Natural killer cell (primary cell): ENCODE measurements at regions of chr11 and their contacts with region 1.

Region 1: DNA sequence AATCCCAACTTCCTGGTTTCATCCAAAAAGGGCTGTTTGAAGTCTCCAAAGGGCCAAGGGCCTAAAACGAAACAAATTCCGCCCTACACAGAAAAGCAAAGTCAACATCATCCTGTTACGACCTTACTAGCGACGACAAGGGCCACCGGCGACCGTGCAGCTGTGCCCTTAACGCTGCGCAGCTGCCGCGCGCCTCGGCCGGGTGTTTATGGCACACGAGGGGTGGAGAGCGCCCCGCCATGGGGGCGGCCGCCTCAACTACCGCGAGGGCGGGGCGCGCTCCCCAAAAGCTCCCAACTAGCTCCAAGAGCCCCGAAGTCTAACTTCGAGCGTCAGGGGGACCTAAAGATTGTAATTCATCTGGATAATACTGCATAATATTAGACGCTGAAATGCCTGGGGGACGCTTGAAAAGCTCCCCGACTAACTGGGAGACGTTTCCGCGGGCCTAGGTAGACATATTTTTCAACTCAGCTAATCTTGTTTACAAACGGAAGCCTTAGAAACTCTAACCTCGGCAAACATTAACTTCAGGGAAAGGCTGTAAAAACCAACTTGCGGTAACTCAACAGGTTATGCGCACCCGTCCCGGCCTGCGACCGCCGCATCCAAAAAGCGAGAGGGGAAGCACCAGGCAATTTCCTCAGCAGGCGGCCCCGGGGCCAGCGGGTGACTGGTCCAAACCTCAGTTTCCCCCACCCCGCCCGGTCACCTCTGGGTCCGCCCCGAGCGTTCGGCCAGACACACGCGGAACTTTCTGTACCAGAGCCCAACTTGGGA is 694 bp downstream of the TMEM123 start:
- DNase-seq: peak; percentile 54 to 88
- ATAC-seq: peak; percentile 55 to 74 (median 56)
- H3K4me3 ChIP-seq: peak overlapping the region; percentile 76
- H3K4me3 Mint-ChIP-seq: peak overlapping the region; percentile 96
- H3K27ac ChIP-seq: peak overlapping the region; percentile 81
- H3K27ac Mint-ChIP-seq: peak overlapping the region; percentile 87 to 93
- H3K4me1 ChIP-seq: peaks cover 19% of the 10 kb centered on the region
- H3K4me1 Mint-ChIP-seq: peaks cover 54 to 70% of the 10 kb centered on the region in 2 donors
- H3K27me3 ChIP-seq: no peaks in the 10 kb centered on the region
- H3K27me3 Mint-ChIP-seq: peaks cover 6 to 7% of the 10 kb centered on the region in 2 donors
- CTCF ChIP-seq: no peak

Region 2: GRCh38 chr11:102317099-102317767 is 134.6 kb before region 1 on chr11 and contains the start of gene BIRC3:
- intact Hi-C with region 1: loop called (anchors 1 kb)
- DNase-seq: peak; percentile 86 to 99
- ATAC-seq: peak; percentile 88 to 96 (median 90)
- H3K4me3 ChIP-seq: peak within 1 kb of the TSS; percentile 76
- H3K4me3 Mint-ChIP-seq: peak within 1 kb of the TSS; percentile 95
- H3K27ac ChIP-seq: peak within 1 kb of the TSS; percentile 96
- H3K27ac Mint-ChIP-seq: peak within 1 kb of the TSS; percentile 96 to 97
- H3K4me1 ChIP-seq: peaks cover 50% of the 10 kb centered on the region
- H3K4me1 Mint-ChIP-seq: peaks cover 59 to 62% of the 10 kb centered on the region in 2 donors
- H3K27me3 ChIP-seq: no peaks in the 10 kb centered on the region
- H3K27me3 Mint-ChIP-seq: no peaks in the 10 kb centered on the region
- CTCF ChIP-seq: no peak
- total RNA-seq, gene BIRC3: 14.2 to 92.3 (median 20.1) TPM

Region 3: GRCh38 chr11:102390667-102391465 is 61.0 kb before region 1 on chr11:
- intact Hi-C with region 1: loop called (anchors 5 kb)
- DNase-seq: peak; percentile 37 to 80
- ATAC-seq: peak; percentile 86 to 97 (median 91)
- H3K4me3 ChIP-seq: no peak overlapping the region
- H3K4me3 Mint-ChIP-seq: no peak overlapping the region
- H3K27ac ChIP-seq: no peak overlapping the region
- H3K27ac Mint-ChIP-seq: no peak overlapping the region
- H3K4me1 ChIP-seq: no peaks in the 10 kb centered on the region
- H3K4me1 Mint-ChIP-seq: peaks cover 14 to 15% of the 10 kb centered on the region in 2 donors
- H3K27me3 ChIP-seq: no peaks in the 10 kb centered on the region
- H3K27me3 Mint-ChIP-seq: no peaks in the 10 kb centered on the region
- CTCF ChIP-seq: peak; percentile 86